Activated T-helper 1 cell treated with anti-CD3 and anti-CD28 coated beads, Interleukin-12 subunit alpha, Interleukin-12 subunit beta, Interleukin-2, Interleukin-4 antibody, amounts not matched to agents 30 ng/mL and 10 ng/mL and 1 ng/mL, durations not matched to agents 14 hours and 24 hours and 36 hours (primary cell): ENCODE measurements at regions of chr19 and their contacts with region 1.

Region 1: GRCh38 chr19:51367565-51368365 is 1.0 kb downstream of the CLDND2 start:
- DNase-seq: peak; percentile 95
- H3K4me3 Mint-ChIP-seq: peak overlapping the region; percentile 98
- H3K27ac Mint-ChIP-seq: peak overlapping the region; percentile 96
- H3K4me1 Mint-ChIP-seq: peaks cover 68% of the 10 kb centered on the region
- H3K27me3 Mint-ChIP-seq: no peaks in the 10 kb centered on the region

Region 2: DNA sequence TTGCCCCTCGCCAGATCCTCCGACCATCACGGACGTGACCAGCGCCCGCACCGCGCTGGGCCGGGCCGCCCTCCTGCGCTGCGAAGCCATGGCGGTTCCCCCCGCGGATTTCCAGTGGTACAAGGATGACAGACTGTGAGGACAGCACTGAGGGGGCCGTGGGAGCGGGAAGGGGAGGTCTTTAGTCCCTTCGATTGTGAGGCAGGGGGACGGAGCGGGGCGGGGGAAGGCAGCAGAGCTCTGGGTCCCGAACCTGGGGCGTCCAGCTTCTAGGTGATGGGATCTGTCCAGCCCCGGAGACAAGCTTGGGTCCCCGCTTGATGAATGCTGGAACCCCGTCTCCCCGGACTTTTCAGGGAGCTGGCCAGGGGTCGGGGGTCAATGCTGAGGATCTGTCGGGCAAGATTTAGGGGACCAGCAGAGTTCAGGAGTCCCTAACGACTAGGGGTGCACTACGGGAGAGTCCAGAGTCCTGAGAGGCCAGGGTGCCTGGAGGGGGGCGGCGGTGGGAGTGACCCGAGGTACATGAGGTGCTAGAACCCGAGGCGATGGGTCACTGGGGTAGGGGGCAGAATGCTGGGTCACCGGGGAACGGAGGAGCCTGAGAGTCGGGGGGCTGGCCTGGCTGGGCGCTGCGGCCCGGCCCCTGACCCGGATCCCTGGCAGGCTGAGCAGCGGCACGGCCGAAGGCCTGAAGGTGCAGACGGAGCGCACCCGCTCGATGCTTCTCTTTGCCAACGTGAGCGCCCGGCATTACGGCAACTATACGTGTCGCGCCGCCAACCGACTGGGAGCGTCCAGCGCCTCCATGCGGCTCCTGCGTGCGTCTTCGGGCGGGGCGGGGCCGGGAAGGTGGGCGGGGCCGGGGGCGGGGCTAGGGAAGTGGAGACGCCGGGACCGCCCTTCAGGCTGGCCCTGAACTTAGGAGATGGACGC is 40.4 kb before region 1 on chr19:
- intact Hi-C with region 1: loop called (anchors 1 kb)
- DNase-seq: peak; percentile 49
- H3K4me3 Mint-ChIP-seq: peak overlapping the region; percentile 79
- H3K27ac Mint-ChIP-seq: peak overlapping the region; percentile 63
- H3K4me1 Mint-ChIP-seq: peaks cover 12% of the 10 kb centered on the region
- H3K27me3 Mint-ChIP-seq: peaks cover 24% of the 10 kb centered on the region

Region 3: DNA sequence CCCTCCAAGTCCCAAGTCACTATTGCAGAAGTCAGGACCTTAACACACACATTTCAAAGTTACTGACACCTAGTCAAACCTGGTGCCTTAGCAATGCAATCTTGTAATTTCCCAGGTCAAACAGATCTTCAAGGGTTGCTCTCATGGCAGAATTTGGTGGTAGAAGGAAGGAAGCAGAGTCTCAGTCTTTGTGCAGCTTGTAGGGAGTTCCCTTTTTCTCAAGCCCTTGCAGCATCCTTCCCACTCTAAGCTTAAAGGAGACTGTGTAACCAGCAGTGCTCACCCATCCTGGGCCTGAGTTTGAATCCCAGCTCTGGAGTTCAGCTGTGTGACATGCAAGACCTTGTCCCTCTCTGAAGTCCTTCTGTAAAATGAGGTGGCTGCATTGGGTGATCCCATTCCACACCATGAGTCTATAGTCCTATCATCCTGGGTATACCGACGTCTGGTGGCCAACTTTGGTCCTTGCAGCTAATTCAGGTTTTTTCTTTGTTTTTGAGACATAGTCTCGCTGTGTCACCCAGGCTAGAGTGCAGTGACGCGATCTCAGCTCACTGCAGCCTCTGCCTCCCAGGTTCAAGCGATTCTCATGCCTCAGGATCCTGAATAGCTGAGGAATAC is 39.9 kb after region 1 on chr19:
- intact Hi-C with region 1: loop called (anchors 5 kb)
- DNase-seq: peak; percentile 12
- H3K4me3 Mint-ChIP-seq: no peak overlapping the region
- H3K27ac Mint-ChIP-seq: no peak overlapping the region
- H3K4me1 Mint-ChIP-seq: peaks cover 7% of the 10 kb centered on the region
- H3K27me3 Mint-ChIP-seq: peaks cover 1% of the 10 kb centered on the region